ENCODE measurements at regions of chr14 and their contacts with region 1.

Region 1: DNA sequence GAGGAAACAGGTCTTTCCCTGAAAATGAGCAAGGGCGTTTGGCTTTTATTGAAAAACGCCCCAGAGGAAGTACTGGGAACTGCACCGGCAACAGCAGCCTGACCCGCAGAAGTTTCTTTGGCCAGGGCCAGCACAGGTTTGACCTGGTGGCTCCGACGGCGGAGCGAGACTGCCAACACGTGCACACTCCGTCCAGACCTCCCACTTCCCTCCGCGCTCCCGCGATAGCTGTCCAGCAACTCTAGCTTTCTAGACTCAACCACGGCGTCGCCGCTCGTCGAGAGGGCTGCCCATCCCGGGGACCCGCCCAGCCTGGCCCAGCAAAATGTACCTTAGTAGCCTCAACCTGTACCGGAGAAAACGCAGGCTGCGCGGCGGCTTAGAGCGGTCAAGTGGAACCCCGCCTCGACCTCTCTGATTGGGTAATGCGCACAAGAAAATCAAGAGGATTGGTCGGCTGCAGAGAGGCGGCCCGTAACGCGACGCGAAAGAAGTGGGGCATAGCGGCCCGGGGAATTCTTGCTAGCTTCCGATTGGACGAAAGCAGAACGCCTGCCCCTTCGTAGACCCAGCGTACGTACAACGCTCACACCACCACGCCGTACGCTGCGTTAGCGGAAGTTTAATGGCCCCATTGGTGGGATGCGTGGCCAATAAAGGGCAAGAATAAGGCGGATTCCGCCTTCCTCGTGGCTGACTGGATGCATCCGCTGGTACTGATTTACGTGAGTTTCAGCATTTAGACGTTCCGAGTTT is at the start of gene WDR89:
- DNase-seq: peak; percentile 97
- H3K4me3 Mint-ChIP-seq: peak within 1 kb of the TSS; percentile 88
- H3K27ac Mint-ChIP-seq: peak within 1 kb of the TSS; percentile 98
- H3K4me1 Mint-ChIP-seq: peaks cover 27% of the 10 kb centered on the region
- H3K27me3 Mint-ChIP-seq: no peaks in the 10 kb centered on the region
- total RNA-seq, gene WDR89: 26.8 and 27.4 TPM in 2 replicates

Region 2: GRCh38 chr14:63478010-63478409 is 163.6 kb before region 1 on chr14:
- intact Hi-C with region 1: loop called (anchors 2 kb)
- DNase-seq: peak; percentile 45
- H3K4me3 Mint-ChIP-seq: peak overlapping the region; percentile 27
- H3K27ac Mint-ChIP-seq: peak overlapping the region; percentile 57
- H3K4me1 Mint-ChIP-seq: peaks cover 47% of the 10 kb centered on the region
- H3K27me3 Mint-ChIP-seq: no peaks in the 10 kb centered on the region

Region 3: GRCh38 chr14:63852817-63853731 is 211.4 kb after region 1 on chr14 and contains the start of gene SYNE2:
- intact Hi-C with region 1: loop called (anchors 2 kb)
- DNase-seq: peak; percentile 81
- H3K4me3 Mint-ChIP-seq: peak within 1 kb of the TSS; percentile 97
- H3K27ac Mint-ChIP-seq: peak within 1 kb of the TSS; percentile 97
- H3K4me1 Mint-ChIP-seq: peaks cover 43% of the 10 kb centered on the region
- H3K27me3 Mint-ChIP-seq: peaks cover 4% of the 10 kb centered on the region
- total RNA-seq, gene SYNE2: 25.1 and 26.9 TPM in 2 replicates

Region 4: DNA sequence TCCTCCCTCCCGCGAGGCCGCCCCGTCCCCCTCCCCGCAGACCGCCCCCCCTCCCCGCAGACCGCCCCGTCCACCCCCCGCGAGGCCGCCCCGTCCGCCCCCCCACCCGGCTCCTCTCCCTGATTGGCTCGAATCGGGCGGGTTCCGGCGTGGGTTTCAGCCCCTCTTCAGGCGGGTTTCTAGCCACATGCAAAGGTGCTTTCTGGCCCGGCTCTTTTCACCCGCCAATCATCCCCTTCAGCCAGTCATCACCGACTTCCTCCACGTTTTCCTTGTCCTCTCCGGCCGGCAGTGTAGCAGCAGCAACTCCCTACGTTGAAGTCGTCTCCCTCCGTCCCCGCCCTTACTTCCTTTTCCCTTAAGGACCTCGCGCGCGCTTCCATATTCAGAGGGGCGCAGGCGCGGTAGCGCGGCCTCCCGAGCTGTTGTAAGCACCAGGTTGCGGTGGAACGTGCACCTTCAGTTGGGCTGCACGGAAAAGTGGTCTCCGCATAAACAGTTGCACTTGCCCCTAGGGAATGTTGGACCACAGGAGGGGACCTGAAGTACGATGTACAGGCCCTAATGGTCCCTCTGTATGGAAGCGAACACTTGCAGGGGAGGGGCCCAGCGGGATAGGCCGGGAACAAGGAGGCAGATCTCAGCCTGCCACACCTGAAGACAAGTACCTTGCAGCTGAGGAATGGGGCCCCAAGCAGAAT is 697.1 kb after region 1 on chr14:
- intact Hi-C with region 1: loop called (anchors 2 kb)
- DNase-seq: peak; percentile 85
- H3K4me3 Mint-ChIP-seq: peak overlapping the region; percentile 81
- H3K27ac Mint-ChIP-seq: peak overlapping the region; percentile 84
- H3K4me1 Mint-ChIP-seq: peaks cover 29% of the 10 kb centered on the region
- H3K27me3 Mint-ChIP-seq: no peaks in the 10 kb centered on the region

Measured in activated T-helper 1 cell treated with anti-CD3 and anti-CD28 coated beads, Interleukin-12 subunit alpha, Interleukin-12 subunit beta, Interleukin-2, Interleukin-4 antibody, amounts not matched to agents 30 ng/mL and 10 ng/mL and 1 ng/mL, durations not matched to agents 14 hours and 24 hours and 36 hours (primary cell).